IMR-90 (cell line): ENCODE measurements at regions of chr7 and their contacts with region 1.

Region 1: GRCh38 chr7:84194543-84195271 is at the start of gene SEMA3A:
- DNase-seq: peak; percentile 94
- ATAC-seq: peak; percentile 68
- H3K4me3 ChIP-seq: peak within 1 kb of the TSS; percentile 84
- H3K27ac ChIP-seq: peak within 1 kb of the TSS; percentile 88
- H3K4me1 ChIP-seq: no peaks in the 10 kb centered on the region
- H3K27me3 ChIP-seq: no peaks in the 10 kb centered on the region
- CTCF ChIP-seq: 0 out of 2 replicates have a peak, but pooled peaks have one; percentile 6
- POLR2A ChIP-seq: peak; percentile 73; the same call in 1 of the 2 replicates
- RAD21 ChIP-seq: no peak
- total RNA-seq, gene SEMA3A: 187 and 213 TPM in 2 replicates

Region 2: GRCh38 chr7:83936056-83936708 is 258.5 kb before region 1 on chr7:
- CTCF ChIA-PET with region 1: interaction called, 4 read pairs
- POLR2A ChIA-PET with region 1: no interaction called
- dilution Hi-C with region 1: no loop called
- in situ Hi-C with region 1: no loop called
- intact Hi-C with region 1: loop called (anchors 2 kb)
- DNase-seq: peak; percentile 81
- ATAC-seq: peak; percentile 95
- H3K4me3 ChIP-seq: no peak overlapping the region
- H3K27ac ChIP-seq: no peak overlapping the region
- H3K4me1 ChIP-seq: no peaks in the 10 kb centered on the region
- H3K27me3 ChIP-seq: no peaks in the 10 kb centered on the region
- CTCF ChIP-seq: peak; percentile 93
- POLR2A ChIP-seq: no peak
- RAD21 ChIP-seq: peak; percentile 95

Region 3: GRCh38 chr7:84085147-84085546 is 109.6 kb before region 1 on chr7:
- CTCF ChIA-PET with region 1: no interaction called
- POLR2A ChIA-PET with region 1: no interaction called
- dilution Hi-C with region 1: no loop called
- in situ Hi-C with region 1: no loop called
- intact Hi-C with region 1: loop called (anchors 5 kb)
- DNase-seq: peak; percentile 85
- ATAC-seq: peak; percentile 61
- H3K4me3 ChIP-seq: no peak overlapping the region
- H3K27ac ChIP-seq: no peak overlapping the region; the same call in 1 of the 2 replicates
- H3K4me1 ChIP-seq: peaks cover 9% of the 10 kb centered on the region
- H3K27me3 ChIP-seq: no peaks in the 10 kb centered on the region
- CTCF ChIP-seq: no peak
- POLR2A ChIP-seq: no peak
- RAD21 ChIP-seq: no peak

Region 4: DNA sequence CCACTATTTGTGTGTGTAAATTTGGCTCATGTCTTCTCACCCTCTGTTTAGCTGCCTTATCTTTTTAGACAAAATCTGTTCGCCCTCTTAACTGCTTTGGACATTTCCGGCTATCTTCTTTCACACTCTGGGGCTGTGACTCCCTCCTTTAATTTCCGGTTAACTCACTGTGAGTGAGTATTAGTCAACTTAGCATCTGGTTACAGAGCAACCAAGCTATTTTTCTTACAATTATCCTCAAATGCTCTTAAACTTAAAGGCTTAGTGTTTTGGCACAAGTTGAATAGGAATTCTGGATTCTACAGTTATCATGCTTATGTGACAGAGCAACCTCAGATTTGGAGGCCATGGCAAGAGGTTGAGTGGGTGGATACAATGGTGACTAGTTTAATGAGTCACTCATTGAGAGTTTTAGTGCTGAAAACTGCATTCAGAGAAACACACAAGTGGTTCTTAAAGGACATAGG is 177.5 kb after region 1 on chr7:
- CTCF ChIA-PET with region 1: no interaction called
- POLR2A ChIA-PET with region 1: no interaction called
- dilution Hi-C with region 1: no loop called
- in situ Hi-C with region 1: no loop called
- intact Hi-C with region 1: loop called (anchors 5 kb)
- DNase-seq: peak; percentile 98
- ATAC-seq: peak; percentile 95
- H3K4me3 ChIP-seq: peak overlapping the region; percentile 4; the same call in 1 of the 2 replicates
- H3K27ac ChIP-seq: no peak overlapping the region; the same call in 1 of the 2 replicates
- H3K4me1 ChIP-seq: peaks cover 10% of the 10 kb centered on the region; the same call in 1 of the 2 replicates
- H3K27me3 ChIP-seq: no peaks in the 10 kb centered on the region
- CTCF ChIP-seq: no peak
- POLR2A ChIP-seq: no peak
- RAD21 ChIP-seq: no peak; the same call in 1 of the 2 replicates

Region 5: DNA sequence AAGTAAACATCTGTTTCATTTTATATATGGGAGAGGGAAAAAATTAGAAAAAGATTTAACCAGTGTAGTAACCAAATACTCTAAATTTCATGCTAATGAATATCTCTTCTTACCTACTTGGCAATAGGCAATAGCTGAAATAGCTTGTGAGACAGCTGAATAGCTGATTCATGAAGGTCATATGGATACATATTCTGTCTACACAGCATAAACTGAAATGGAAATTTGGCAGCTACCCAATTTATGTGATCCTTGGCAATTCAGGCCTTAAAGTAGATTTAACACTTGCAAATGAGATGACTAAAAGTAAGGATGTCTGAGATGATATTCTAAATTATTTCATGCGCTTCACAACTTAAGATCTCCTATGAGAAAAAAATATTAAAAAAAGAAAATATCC is 261.1 kb after region 1 on chr7:
- CTCF ChIA-PET with region 1: interaction called, 4 read pairs
- POLR2A ChIA-PET with region 1: no interaction called
- dilution Hi-C with region 1: no loop called
- in situ Hi-C with region 1: no loop called
- intact Hi-C with region 1: loop called (anchors 2 kb)
- DNase-seq: peak; percentile 30
- ATAC-seq: no peak
- H3K4me3 ChIP-seq: no peak overlapping the region
- H3K27ac ChIP-seq: no peak overlapping the region
- H3K4me1 ChIP-seq: no peaks in the 10 kb centered on the region
- H3K27me3 ChIP-seq: no peaks in the 10 kb centered on the region
- CTCF ChIP-seq: no peak
- POLR2A ChIP-seq: no peak
- RAD21 ChIP-seq: no peak

Region 6: GRCh38 chr7:84647797-84648757 is 453.4 kb after region 1 on chr7:
- CTCF ChIA-PET with region 1: no interaction called
- POLR2A ChIA-PET with region 1: no interaction called
- dilution Hi-C with region 1: no loop called
- in situ Hi-C with region 1: no loop called
- intact Hi-C with region 1: loop called (anchors 5 kb)
- DNase-seq: peak; percentile 94
- ATAC-seq: peak; percentile 96
- H3K4me3 ChIP-seq: no peak overlapping the region
- H3K27ac ChIP-seq: peak overlapping the region; percentile 69
- H3K4me1 ChIP-seq: peaks cover 8% of the 10 kb centered on the region
- H3K27me3 ChIP-seq: no peaks in the 10 kb centered on the region
- CTCF ChIP-seq: no peak
- POLR2A ChIP-seq: no peak
- RAD21 ChIP-seq: no peak

Region 7: GRCh38 chr7:85023045-85023712 is 828.5 kb after region 1 on chr7:
- CTCF ChIA-PET with region 1: interaction called, 4 read pairs
- POLR2A ChIA-PET with region 1: no interaction called
- dilution Hi-C with region 1: no loop called
- in situ Hi-C with region 1: loop called (anchors 10 kb)
- intact Hi-C with region 1: loop called (anchors 1 kb)
- DNase-seq: peak; percentile 58
- ATAC-seq: no peak
- H3K4me3 ChIP-seq: no peak overlapping the region
- H3K27ac ChIP-seq: no peak overlapping the region
- H3K4me1 ChIP-seq: no peaks in the 10 kb centered on the region
- H3K27me3 ChIP-seq: no peaks in the 10 kb centered on the region
- CTCF ChIP-seq: peak; percentile 78
- POLR2A ChIP-seq: no peak
- RAD21 ChIP-seq: peak; percentile 91